ENCODE measurements at regions of chr15 and their contacts with region 1.

Region 1: GRCh38 chr15:65792130-65792987 is at the start of gene DENND4A:
- DNase-seq: peak; percentile 99
- H3K4me3 Mint-ChIP-seq: peak within 1 kb of the TSS; percentile 88
- H3K27ac Mint-ChIP-seq: peak within 1 kb of the TSS; percentile 98
- H3K4me1 Mint-ChIP-seq: peaks cover 58% of the 10 kb centered on the region
- H3K27me3 Mint-ChIP-seq: no peaks in the 10 kb centered on the region
- total RNA-seq, gene DENND4A: 23.9 to 24.9 TPM

Region 2: DNA sequence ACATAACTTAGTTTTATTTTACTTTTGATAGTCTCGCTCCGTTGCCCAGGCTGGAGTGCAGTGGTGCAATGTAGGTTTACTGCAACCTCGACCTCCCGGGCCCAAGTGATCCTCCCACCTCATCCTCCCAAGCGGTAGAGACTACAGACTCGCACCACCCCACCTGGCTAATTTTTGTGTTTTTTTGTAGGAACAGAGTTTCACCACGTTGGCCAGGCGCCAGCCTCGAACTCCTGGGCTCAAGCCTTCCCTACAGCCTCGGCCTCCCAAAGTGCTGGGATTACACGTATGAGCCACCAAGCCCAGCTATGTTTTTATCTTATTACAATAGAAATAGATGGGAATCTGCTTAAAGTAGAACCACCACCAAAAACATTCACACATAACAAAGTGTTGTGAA is 493.6 kb before region 1 on chr15:
- CTCF ChIA-PET with region 1: no interaction called
- intact Hi-C with region 1: loop called (anchors 5 kb)
- DNase-seq: no peak
- H3K4me3 Mint-ChIP-seq: peak overlapping the region; percentile 70
- H3K27ac Mint-ChIP-seq: peak overlapping the region; percentile 81
- H3K4me1 Mint-ChIP-seq: peaks cover 25% of the 10 kb centered on the region
- H3K27me3 Mint-ChIP-seq: peaks cover 2% of the 10 kb centered on the region

Region 3: GRCh38 chr15:65773386-65774111 is 18.8 kb before region 1 on chr15:
- CTCF ChIA-PET with region 1: no interaction called
- intact Hi-C with region 1: loop called (anchors 1 kb)
- DNase-seq: peak; percentile 35
- H3K4me3 Mint-ChIP-seq: no peak overlapping the region
- H3K27ac Mint-ChIP-seq: peak overlapping the region; percentile 42
- H3K4me1 Mint-ChIP-seq: peaks cover 40% of the 10 kb centered on the region
- H3K27me3 Mint-ChIP-seq: no peaks in the 10 kb centered on the region

Region 4: GRCh38 chr15:65804252-65804931 is 12.0 kb after region 1 on chr15:
- CTCF ChIA-PET with region 1: interaction called, 4 read pairs
- intact Hi-C with region 1: loop called (anchors 1 kb)
- DNase-seq: no peak
- H3K4me3 Mint-ChIP-seq: no peak overlapping the region
- H3K27ac Mint-ChIP-seq: peak overlapping the region; percentile 36
- H3K4me1 Mint-ChIP-seq: peaks cover 36% of the 10 kb centered on the region
- H3K27me3 Mint-ChIP-seq: no peaks in the 10 kb centered on the region

Region 5: GRCh38 chr15:65818927-65819562 is 26.7 kb after region 1 on chr15:
- CTCF ChIA-PET with region 1: interaction called, 10 read pairs
- intact Hi-C with region 1: loop called (anchors 1 kb)
- DNase-seq: no peak
- H3K4me3 Mint-ChIP-seq: peak overlapping the region; percentile 22
- H3K27ac Mint-ChIP-seq: peak overlapping the region; percentile 59
- H3K4me1 Mint-ChIP-seq: peaks cover 47% of the 10 kb centered on the region
- H3K27me3 Mint-ChIP-seq: no peaks in the 10 kb centered on the region

Region 6: GRCh38 chr15:65887565-65887964 is 95.2 kb after region 1 on chr15:
- CTCF ChIA-PET with region 1: no interaction called
- intact Hi-C with region 1: loop called (anchors 1 kb)
- DNase-seq: peak; percentile 79
- H3K4me3 Mint-ChIP-seq: peak overlapping the region; percentile 32
- H3K27ac Mint-ChIP-seq: peak overlapping the region; percentile 81
- H3K4me1 Mint-ChIP-seq: peaks cover 81% of the 10 kb centered on the region
- H3K27me3 Mint-ChIP-seq: no peaks in the 10 kb centered on the region

Region 7: DNA sequence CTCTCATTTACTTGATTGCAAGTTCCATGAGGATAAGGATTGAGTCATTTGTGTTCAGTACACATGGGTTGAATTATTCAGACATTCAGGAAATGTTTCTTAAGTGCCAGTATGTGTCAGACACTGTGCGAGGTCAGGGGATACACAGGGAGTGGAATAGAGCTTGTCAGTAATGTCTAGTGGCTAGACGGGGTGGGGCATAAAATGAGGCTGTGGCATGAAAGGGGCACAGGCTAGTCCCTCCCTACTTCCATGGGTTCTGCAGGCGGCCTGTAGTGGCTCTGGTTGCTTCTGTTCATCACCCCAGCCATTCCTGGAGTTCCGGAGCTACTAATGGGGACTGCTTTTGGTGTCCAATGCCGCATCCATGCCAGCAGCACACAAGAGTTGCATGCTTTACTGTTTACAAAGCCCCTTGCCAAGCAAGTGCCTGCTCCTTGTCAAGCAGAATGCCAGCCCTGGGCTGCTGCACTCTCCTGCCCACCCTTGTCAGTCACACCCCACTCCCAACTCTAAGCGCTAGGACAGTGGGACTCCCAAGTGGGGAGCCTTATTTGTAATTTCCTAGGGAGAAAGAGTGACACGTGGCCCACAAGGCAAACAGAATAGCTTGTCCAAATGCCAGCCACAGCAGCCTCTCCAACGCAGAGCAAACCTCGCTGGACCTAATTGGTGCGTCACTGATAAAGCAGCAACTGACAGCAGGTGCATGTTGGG is 147.7 kb after region 1 on chr15:
- CTCF ChIA-PET with region 1: no interaction called
- intact Hi-C with region 1: no loop called
- DNase-seq: no peak
- H3K4me3 Mint-ChIP-seq: no peak overlapping the region
- H3K27ac Mint-ChIP-seq: no peak overlapping the region
- H3K4me1 Mint-ChIP-seq: no peaks in the 10 kb centered on the region
- H3K27me3 Mint-ChIP-seq: no peaks in the 10 kb centered on the region